Activated CD4-positive, alpha-beta memory T cell treated with anti-CD3 and anti-CD28 coated beads for 36 hours (primary cell): ENCODE measurements at regions of chr7 and their contacts with region 1.

Region 1: GRCh38 chr7:2709553-2710285 is 21.7 kb downstream of the AMZ1 start:
- DNase-seq: peak; percentile 90
- H3K4me3 Mint-ChIP-seq: peak overlapping the region; percentile 75
- H3K27ac Mint-ChIP-seq: peak overlapping the region; percentile 82
- H3K4me1 Mint-ChIP-seq: peaks cover 21% of the 10 kb centered on the region
- H3K27me3 Mint-ChIP-seq: no peaks in the 10 kb centered on the region

Region 2: GRCh38 chr7:2451171-2452073 is 258.3 kb before region 1 on chr7:
- CTCF ChIA-PET with region 1: interaction called, 33 read pairs
- POLR2A ChIA-PET with region 1: no interaction called
- intact Hi-C with region 1: no loop called
- DNase-seq: peak; percentile 87
- H3K4me3 Mint-ChIP-seq: peak overlapping the region; percentile 46
- H3K27ac Mint-ChIP-seq: no peak overlapping the region
- H3K4me1 Mint-ChIP-seq: peaks cover 7% of the 10 kb centered on the region
- H3K27me3 Mint-ChIP-seq: no peaks in the 10 kb centered on the region

Region 3: GRCh38 chr7:2537981-2538851 is 171.5 kb before region 1 on chr7:
- CTCF ChIA-PET with region 1: no interaction called
- POLR2A ChIA-PET with region 1: no interaction called
- intact Hi-C with region 1: no loop called
- DNase-seq: no peak
- H3K4me3 Mint-ChIP-seq: no peak overlapping the region
- H3K27ac Mint-ChIP-seq: no peak overlapping the region
- H3K4me1 Mint-ChIP-seq: no peaks in the 10 kb centered on the region
- H3K27me3 Mint-ChIP-seq: no peaks in the 10 kb centered on the region

Region 4: DNA sequence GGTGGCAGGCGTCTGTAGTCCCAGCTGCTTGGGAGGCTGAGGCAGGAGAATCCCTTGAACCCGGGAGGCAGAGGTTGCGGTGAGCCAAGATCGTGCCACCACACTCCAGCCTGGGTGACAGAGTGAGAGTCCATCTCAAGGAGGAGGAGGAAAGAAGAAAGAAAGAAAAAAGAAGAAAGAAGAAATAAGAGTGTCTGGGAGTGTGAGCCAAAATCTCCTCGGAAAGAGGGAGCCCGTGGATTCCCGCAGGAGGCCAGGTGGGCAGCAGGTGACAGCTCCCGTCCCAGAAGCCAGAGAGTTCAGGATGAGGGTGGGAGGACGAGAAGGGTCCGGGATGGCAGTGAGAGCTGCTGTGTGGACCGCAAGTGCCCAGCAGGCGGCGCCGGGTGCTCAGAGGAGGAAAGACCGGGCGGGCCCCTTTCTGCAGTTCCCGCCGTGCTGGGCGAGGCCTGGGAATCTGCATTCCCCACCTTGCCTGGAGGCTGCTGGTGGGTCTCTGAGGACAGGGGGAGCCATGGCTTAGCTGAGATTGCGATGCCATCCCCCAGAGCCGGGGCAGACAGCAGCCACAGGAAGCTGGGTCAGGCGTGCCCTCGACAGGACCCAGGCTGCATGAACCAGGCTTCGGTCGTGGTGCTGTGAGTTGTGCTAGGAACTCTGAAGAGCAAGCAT is 38.9 kb before region 1 on chr7:
- CTCF ChIA-PET with region 1: interaction called, 115 read pairs
- POLR2A ChIA-PET with region 1: interaction called, 3 read pairs
- intact Hi-C with region 1: loop called (anchors 1 kb)
- DNase-seq: peak; percentile 80
- H3K4me3 Mint-ChIP-seq: no peak overlapping the region
- H3K27ac Mint-ChIP-seq: no peak overlapping the region
- H3K4me1 Mint-ChIP-seq: peaks cover 6% of the 10 kb centered on the region
- H3K27me3 Mint-ChIP-seq: peaks cover 8% of the 10 kb centered on the region

Region 5: GRCh38 chr7:2692543-2692942 is 17.2 kb before region 1 on chr7:
- CTCF ChIA-PET with region 1: interaction called, 42 read pairs
- POLR2A ChIA-PET with region 1: no interaction called
- intact Hi-C with region 1: no loop called
- DNase-seq: no peak
- H3K4me3 Mint-ChIP-seq: no peak overlapping the region
- H3K27ac Mint-ChIP-seq: no peak overlapping the region
- H3K4me1 Mint-ChIP-seq: peaks cover 6% of the 10 kb centered on the region
- H3K27me3 Mint-ChIP-seq: peaks cover 20% of the 10 kb centered on the region

Region 6: DNA sequence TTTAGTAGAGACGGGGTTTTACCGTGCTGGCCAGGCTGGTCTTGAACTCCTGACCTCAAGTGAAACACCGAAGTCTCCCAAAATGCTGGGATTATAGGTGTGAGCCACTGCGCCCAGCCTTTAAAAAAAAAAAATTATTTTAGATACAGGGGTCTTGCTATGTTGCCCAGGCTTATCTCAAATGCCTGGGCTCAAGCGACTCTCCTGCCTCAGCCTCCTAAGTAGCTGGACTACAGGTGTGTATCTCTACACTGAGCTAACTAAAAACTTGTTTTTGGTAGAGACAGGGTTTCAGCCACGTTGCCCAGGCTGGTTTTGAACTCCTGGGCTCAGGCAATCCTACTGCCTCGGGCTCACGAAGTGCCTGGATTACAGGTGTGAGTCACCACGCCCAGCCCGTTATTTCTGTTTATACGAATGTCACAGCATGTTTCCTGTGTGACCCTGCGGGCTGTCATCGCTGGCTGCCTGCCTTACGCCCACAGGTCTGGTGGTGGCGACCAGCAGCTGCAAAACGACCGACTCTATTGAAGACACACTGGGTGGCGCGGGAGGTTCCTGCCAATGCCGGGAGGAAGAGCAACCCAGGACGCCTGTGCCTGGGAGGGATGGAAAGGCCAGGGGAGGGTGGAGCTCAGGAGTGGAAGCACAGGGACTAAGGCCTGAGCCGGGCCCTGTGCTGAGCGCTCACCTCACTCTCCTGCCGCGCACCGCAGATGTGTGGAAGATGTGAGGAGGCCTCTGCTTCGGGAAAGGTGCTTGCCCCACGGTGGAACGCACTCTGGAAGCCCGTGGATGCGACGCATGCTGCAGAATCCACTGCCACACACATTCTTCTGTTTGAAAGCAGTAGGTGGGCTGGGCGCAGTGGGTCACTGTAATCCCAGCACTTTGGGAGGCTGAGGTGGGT is 11.1 kb after region 1 on chr7:
- CTCF ChIA-PET with region 1: interaction called, 50 read pairs
- POLR2A ChIA-PET with region 1: interaction called, 8 read pairs
- intact Hi-C with region 1: loop called (anchors 1 kb)
- DNase-seq: peak; percentile 95
- H3K4me3 Mint-ChIP-seq: peak overlapping the region; percentile 16
- H3K27ac Mint-ChIP-seq: peak overlapping the region; percentile 56
- H3K4me1 Mint-ChIP-seq: peaks cover 47% of the 10 kb centered on the region
- H3K27me3 Mint-ChIP-seq: no peaks in the 10 kb centered on the region

Region 7: GRCh38 chr7:3154912-3155494 is 445.3 kb after region 1 on chr7:
- CTCF ChIA-PET with region 1: no interaction called
- POLR2A ChIA-PET with region 1: no interaction called
- intact Hi-C with region 1: no loop called
- DNase-seq: peak; percentile 70
- H3K4me3 Mint-ChIP-seq: no peak overlapping the region
- H3K27ac Mint-ChIP-seq: peak overlapping the region; percentile 19
- H3K4me1 Mint-ChIP-seq: peaks cover 19% of the 10 kb centered on the region
- H3K27me3 Mint-ChIP-seq: peaks cover 2% of the 10 kb centered on the region